AG04449 (cell line): ENCODE measurements at regions of chr1 and their contacts with region 1.

Region 1: GRCh38 chr1:226608699-226609505 is 60.3 kb downstream of the STUM start:
- DNase-seq: no peak
- H3K4me3 ChIP-seq: no peak overlapping the region
- CTCF ChIP-seq: peak; percentile 80

Region 2: GRCh38 chr1:226355669-226356551 is 253.0 kb before region 1 on chr1:
- CTCF ChIA-PET with region 1: no interaction called
- POLR2A ChIA-PET with region 1: no interaction called
- DNase-seq: no peak
- H3K4me3 ChIP-seq: no peak overlapping the region
- CTCF ChIP-seq: no peak

Region 3: GRCh38 chr1:226626577-226626956 is 17.7 kb after region 1 on chr1:
- CTCF ChIA-PET with region 1: interaction called, 14 read pairs
- POLR2A ChIA-PET with region 1: no interaction called
- DNase-seq: no peak
- H3K4me3 ChIP-seq: no peak overlapping the region
- CTCF ChIP-seq: peak; percentile 86